OCI-LY7 (cell line): ENCODE measurements at regions of chr3 and their contacts with region 1.

Region 1: GRCh38 chr3:194134757-194135528 is 1.0 kb upstream of the HES1 start:
- DNase-seq: peak; percentile 95
- H3K4me3 ChIP-seq: peak overlapping the region; percentile 84
- H3K27ac ChIP-seq: peak overlapping the region; percentile 75
- H3K4me1 ChIP-seq: peaks cover 63% of the 10 kb centered on the region
- CTCF ChIP-seq: no peak

Region 2: GRCh38 chr3:193665370-193665989 is 469.5 kb before region 1 on chr3:
- CTCF ChIA-PET with region 1: no interaction called
- POLR2A ChIA-PET with region 1: interaction called, 4 read pairs
- intact Hi-C with region 1: loop called (anchors 5 kb)
- DNase-seq: peak; percentile 58
- H3K4me3 ChIP-seq: no peak overlapping the region
- H3K27ac ChIP-seq: no peak overlapping the region
- H3K4me1 ChIP-seq: no peaks in the 10 kb centered on the region
- CTCF ChIP-seq: peak; percentile 91

Region 3: GRCh38 chr3:193788189-193788991 is 346.6 kb before region 1 on chr3:
- CTCF ChIA-PET with region 1: interaction called, 3 read pairs
- POLR2A ChIA-PET with region 1: no interaction called
- intact Hi-C with region 1: loop called (anchors 1 kb)
- DNase-seq: peak; percentile 81
- H3K4me3 ChIP-seq: no peak overlapping the region
- H3K27ac ChIP-seq: no peak overlapping the region
- H3K4me1 ChIP-seq: no peaks in the 10 kb centered on the region
- CTCF ChIP-seq: peak; percentile 92

Region 4: GRCh38 chr3:193971261-193971751 is 163.6 kb before region 1 on chr3:
- CTCF ChIA-PET with region 1: no interaction called
- POLR2A ChIA-PET with region 1: interaction called, 3 read pairs
- intact Hi-C with region 1: loop called (anchors 1 kb)
- DNase-seq: no peak
- H3K4me3 ChIP-seq: no peak overlapping the region
- H3K27ac ChIP-seq: no peak overlapping the region
- H3K4me1 ChIP-seq: peaks cover 7% of the 10 kb centered on the region
- CTCF ChIP-seq: no peak

Region 5: GRCh38 chr3:194084284-194084683 is 50.7 kb before region 1 on chr3:
- CTCF ChIA-PET with region 1: interaction called, 5 read pairs
- POLR2A ChIA-PET with region 1: interaction called, 4 read pairs
- intact Hi-C with region 1: loop called (anchors 1 kb)
- DNase-seq: peak; percentile 70
- H3K4me3 ChIP-seq: peak overlapping the region; percentile 0
- H3K27ac ChIP-seq: peak overlapping the region; percentile 33
- H3K4me1 ChIP-seq: peaks cover 55% of the 10 kb centered on the region
- CTCF ChIP-seq: no peak

Region 6: GRCh38 chr3:194120789-194121770 is 13.9 kb before region 1 on chr3:
- CTCF ChIA-PET with region 1: no interaction called
- POLR2A ChIA-PET with region 1: interaction called, 11 read pairs
- intact Hi-C with region 1: no loop called
- DNase-seq: peak; percentile 60
- H3K4me3 ChIP-seq: peak overlapping the region; percentile 32
- H3K27ac ChIP-seq: no peak overlapping the region
- H3K4me1 ChIP-seq: peaks cover 30% of the 10 kb centered on the region
- CTCF ChIP-seq: no peak

Region 7: DNA sequence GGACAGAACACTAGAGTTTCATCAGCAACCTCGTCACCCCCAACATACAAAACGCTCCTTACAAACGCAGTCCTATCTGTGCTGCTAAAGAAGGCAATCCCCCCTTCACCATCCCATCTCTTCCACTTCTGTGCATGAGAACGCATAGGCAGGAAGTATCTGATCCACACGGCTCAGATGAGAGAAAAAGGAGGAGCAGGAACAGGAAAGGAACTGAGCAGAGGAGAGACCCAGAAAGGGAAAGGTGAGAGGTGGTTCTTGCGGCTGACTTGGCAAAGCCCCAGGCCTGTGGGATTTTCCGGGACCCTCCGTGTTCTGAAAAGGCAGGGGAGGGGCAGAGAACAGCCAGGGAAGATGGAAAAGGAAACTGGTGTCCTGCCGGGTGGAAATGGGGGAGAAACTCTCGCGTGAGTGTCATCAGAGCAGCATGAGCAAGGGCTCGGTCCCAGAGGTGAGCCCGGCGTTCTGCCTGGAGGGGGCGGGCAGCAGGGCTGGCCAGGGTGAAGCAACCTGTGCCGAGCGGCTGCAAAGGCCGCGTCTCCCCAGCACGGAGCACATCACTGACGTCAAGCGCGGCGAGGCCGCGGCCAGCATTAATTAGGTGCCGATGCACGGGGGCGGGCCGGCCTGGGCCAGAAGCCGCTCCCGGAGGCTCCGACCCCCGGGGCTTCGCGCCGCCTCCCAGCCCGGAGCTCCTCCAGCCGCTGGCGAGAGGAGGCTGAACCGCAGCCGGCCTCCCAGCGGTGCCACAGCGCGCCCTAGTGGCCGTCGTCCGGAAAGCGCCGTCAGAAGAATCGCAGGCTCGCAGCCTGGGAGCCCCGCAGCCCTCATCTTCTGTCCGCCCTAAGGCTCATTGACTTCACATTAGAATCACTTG is 180.4 kb after region 1 on chr3:
- CTCF ChIA-PET with region 1: no interaction called
- POLR2A ChIA-PET with region 1: interaction called, 3 read pairs
- intact Hi-C with region 1: loop called (anchors 2 kb)
- DNase-seq: peak; percentile 66
- H3K4me3 ChIP-seq: no peak overlapping the region
- H3K27ac ChIP-seq: no peak overlapping the region
- H3K4me1 ChIP-seq: no peaks in the 10 kb centered on the region
- CTCF ChIP-seq: peak; percentile 89